Endothelial cell of umbilical vein (primary cell): ENCODE measurements at regions of chrX and their contacts with region 1.

Region 1: DNA sequence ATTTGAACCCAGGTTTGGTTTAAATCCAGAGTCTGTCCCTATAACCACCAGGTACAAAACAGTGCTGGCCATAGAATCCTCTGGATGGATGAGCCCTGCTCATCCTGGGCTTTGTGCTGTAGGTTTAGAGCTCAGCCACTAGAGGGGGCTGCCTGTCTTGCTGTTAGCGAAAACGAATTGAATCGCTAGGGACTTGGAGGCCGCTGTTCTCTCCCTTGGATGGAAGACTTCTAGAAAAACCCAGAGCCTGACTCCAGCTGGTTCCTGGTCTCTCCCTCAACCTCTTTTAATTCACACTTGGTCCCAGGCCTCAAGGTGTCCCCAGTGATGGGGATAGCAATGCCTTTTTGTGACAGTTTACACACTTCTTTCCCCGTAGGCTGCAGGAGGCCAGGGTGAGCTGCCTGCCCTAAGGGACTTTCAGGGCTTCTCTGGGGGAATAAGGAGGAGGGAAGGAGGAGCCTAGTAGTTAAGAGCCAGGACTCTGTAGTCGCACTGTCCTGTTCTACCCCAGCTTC is 8.7 kb downstream of the RIPPLY1 start:
- DNase-seq: peak; percentile 57
- H3K4me3 ChIP-seq: no peak overlapping the region
- H3K27ac ChIP-seq: peak overlapping the region; percentile 35
- H3K4me1 ChIP-seq: peaks cover 16% of the 10 kb centered on the region
- H3K27me3 ChIP-seq: no peaks in the 10 kb centered on the region
- CTCF ChIP-seq: peak; percentile 73 to 74
- POLR2A ChIP-seq: no peak

Region 2: DNA sequence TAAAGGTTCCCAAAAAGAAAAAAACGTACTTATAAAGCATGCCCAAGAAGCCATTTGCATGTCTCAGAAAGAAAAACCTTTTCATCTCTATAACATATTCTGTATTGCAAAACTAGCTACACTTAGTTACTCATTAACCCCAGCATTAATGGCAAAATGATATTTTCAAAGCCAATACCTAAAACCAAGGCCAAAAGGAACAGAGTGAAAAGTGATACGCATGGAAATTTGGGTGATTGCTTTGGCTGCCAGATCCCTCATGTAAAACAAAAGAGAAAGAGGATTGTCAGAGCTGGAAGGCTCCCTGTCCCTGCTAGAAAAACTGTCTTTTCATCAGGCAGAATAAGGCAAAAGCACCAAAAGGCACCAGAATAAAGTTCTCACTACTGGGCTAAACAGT is 329.5 kb before region 1 on chrX:
- CTCF ChIA-PET with region 1: no interaction called
- POLR2A ChIA-PET with region 1: no interaction called
- dilution Hi-C with region 1: no loop called
- intact Hi-C with region 1: no loop called
- DNase-seq: no peak
- H3K4me3 ChIP-seq: no peak overlapping the region
- H3K27ac ChIP-seq: no peak overlapping the region
- H3K4me1 ChIP-seq: no peaks in the 10 kb centered on the region
- H3K27me3 ChIP-seq: no peaks in the 10 kb centered on the region
- CTCF ChIP-seq: no peak
- POLR2A ChIP-seq: no peak

Region 3: DNA sequence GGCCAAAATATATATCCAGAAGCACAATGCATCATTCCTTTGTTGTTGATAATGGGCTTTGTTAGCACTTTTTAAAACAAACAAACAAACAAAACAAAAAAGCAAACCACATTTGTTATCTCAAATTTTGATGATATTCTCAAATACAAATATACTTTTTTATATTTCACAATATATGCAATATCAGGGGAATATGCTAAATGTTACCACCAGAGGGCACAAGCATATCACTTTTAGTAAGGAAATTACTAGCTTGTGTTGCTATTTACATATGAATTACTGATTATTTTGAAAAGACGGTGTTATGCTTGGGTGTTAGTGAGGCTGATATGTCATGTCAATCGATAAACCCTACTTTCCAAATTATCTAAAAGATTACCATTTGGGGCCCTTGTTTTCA is 20.4 kb before region 1 on chrX:
- CTCF ChIA-PET with region 1: interaction called, 12 read pairs
- POLR2A ChIA-PET with region 1: no interaction called
- dilution Hi-C with region 1: no loop called
- intact Hi-C with region 1: no loop called
- DNase-seq: peak; percentile 35
- H3K4me3 ChIP-seq: no peak overlapping the region
- H3K27ac ChIP-seq: no peak overlapping the region
- H3K4me1 ChIP-seq: no peaks in the 10 kb centered on the region
- H3K27me3 ChIP-seq: no peaks in the 10 kb centered on the region
- CTCF ChIP-seq: peak in 1 of 2 donors; percentile 8
- POLR2A ChIP-seq: no peak

Region 4: GRCh38 chrX:106917830-106918500 is 23.5 kb after region 1 on chrX:
- CTCF ChIA-PET with region 1: interaction called, 7 read pairs
- POLR2A ChIA-PET with region 1: interaction called, 3 read pairs
- dilution Hi-C with region 1: no loop called
- intact Hi-C with region 1: loop called (anchors 1 kb)
- DNase-seq: peak; percentile 86
- H3K4me3 ChIP-seq: no peak overlapping the region
- H3K27ac ChIP-seq: no peak overlapping the region
- H3K4me1 ChIP-seq: peaks cover 17% of the 10 kb centered on the region
- H3K27me3 ChIP-seq: peaks cover 3 to 17% of the 10 kb centered on the region in 2 experiments
- CTCF ChIP-seq: no peak
- POLR2A ChIP-seq: no peak

Region 5: GRCh38 chrX:106952988-106953387 is 58.5 kb after region 1 on chrX:
- CTCF ChIA-PET with region 1: interaction called, 121 read pairs
- POLR2A ChIA-PET with region 1: no interaction called
- dilution Hi-C with region 1: no loop called
- intact Hi-C with region 1: loop called (anchors 1 kb)
- DNase-seq: peak; percentile 25
- H3K4me3 ChIP-seq: no peak overlapping the region
- H3K27ac ChIP-seq: no peak overlapping the region
- H3K4me1 ChIP-seq: no peaks in the 10 kb centered on the region
- H3K27me3 ChIP-seq: no peaks in the 10 kb centered on the region
- CTCF ChIP-seq: peak in 1 of 2 donors; percentile 13
- POLR2A ChIP-seq: no peak

Region 6: DNA sequence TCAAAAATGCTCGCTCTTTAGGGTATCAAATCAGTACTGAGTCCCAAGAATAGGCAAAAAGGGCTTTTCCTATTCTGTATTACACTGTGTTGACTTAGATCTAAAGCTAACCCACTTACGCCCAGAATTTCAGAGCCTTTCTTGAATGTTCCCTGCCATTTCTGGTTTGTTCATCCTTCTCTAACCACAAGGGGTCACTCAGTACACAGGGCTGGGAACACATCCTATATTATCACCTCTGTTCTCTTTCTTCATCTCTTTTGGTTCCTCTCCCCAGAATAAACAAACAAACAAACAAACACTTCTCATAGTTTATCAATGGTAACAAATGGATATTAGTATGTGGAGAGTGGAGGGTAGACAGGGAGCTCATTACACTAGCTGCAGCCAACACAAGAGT is 131.1 kb after region 1 on chrX:
- CTCF ChIA-PET with region 1: interaction called, 9 read pairs
- POLR2A ChIA-PET with region 1: no interaction called
- dilution Hi-C with region 1: no loop called
- intact Hi-C with region 1: loop called (anchors 10 kb)
- DNase-seq: peak; percentile 29
- H3K4me3 ChIP-seq: no peak overlapping the region
- H3K27ac ChIP-seq: no peak overlapping the region
- H3K4me1 ChIP-seq: no peaks in the 10 kb centered on the region
- H3K27me3 ChIP-seq: no peaks in the 10 kb centered on the region
- CTCF ChIP-seq: peak; percentile 24 to 39
- POLR2A ChIP-seq: no peak

Region 7: DNA sequence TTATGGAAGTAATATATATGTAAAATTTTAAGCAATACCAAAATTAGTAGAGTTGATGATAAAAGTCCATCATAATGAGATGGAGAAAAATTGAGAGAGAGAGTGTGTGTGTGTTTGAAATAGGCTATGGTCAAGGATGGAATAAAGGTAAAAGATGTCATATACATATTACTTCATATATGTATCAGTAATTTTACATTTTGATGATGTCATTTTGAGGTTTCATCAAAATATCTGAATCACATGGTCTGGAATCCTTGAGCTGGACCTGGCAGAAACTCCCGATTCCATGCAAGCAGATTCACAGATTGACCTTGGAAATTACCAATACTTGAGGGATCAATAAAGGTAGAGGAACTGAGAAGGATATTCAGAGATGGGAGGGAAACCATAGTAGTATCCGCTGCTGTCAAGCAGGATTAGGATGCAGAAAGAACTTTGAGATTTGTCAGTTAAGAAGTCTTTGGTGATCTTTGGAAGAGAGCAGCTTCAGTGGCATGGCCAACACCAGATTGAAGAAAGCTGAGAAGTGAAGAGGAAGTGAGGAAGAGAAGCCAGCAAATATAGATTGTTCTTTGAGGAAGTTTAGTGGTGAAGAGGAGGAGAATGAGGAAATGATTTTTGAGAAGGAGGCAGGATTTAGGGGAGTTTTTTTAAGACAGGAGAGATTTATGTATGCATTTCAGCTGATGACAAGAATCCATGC is 333.5 kb after region 1 on chrX:
- CTCF ChIA-PET with region 1: no interaction called
- POLR2A ChIA-PET with region 1: no interaction called
- dilution Hi-C with region 1: no loop called
- intact Hi-C with region 1: no loop called
- DNase-seq: no peak
- H3K4me3 ChIP-seq: no peak overlapping the region
- H3K27ac ChIP-seq: no peak overlapping the region
- H3K4me1 ChIP-seq: no peaks in the 10 kb centered on the region
- H3K27me3 ChIP-seq: no peaks in the 10 kb centered on the region
- CTCF ChIP-seq: no peak
- POLR2A ChIP-seq: no peak